Activated CD4-positive, alpha-beta T cell treated with anti-CD3 and anti-CD28 coated beads, Interleukin-2, amount 10 ng/mL, durations not matched to agents 24 days and 14 days (primary cell): ENCODE measurements at regions of chr1 and their contacts with region 1.

Region 1: GRCh38 chr1:11681071-11681771 is at the start of gene MAD2L2:
- DNase-seq: peak; percentile 98
- H3K4me3 Mint-ChIP-seq: peak within 1 kb of the TSS; percentile 92
- H3K27ac Mint-ChIP-seq: peak within 1 kb of the TSS; percentile 93
- H3K4me1 Mint-ChIP-seq: peaks cover 16% of the 10 kb centered on the region
- H3K27me3 Mint-ChIP-seq: peaks cover 10% of the 10 kb centered on the region
- total RNA-seq, gene MAD2L2: 80.1 and 81.5 TPM in 2 replicates

Region 2: GRCh38 chr1:11272832-11273594 is 408.2 kb before region 1 on chr1 and contains the start of gene UBIAD1:
- intact Hi-C with region 1: loop called (anchors 5 kb)
- DNase-seq: peak; percentile 93
- H3K4me3 Mint-ChIP-seq: peak within 1 kb of the TSS; percentile 91
- H3K27ac Mint-ChIP-seq: peak within 1 kb of the TSS; percentile 89
- H3K4me1 Mint-ChIP-seq: peaks cover 24% of the 10 kb centered on the region
- H3K27me3 Mint-ChIP-seq: peaks cover 2% of the 10 kb centered on the region
- total RNA-seq, gene UBIAD1: 32.4 and 32.5 TPM in 2 replicates

Region 3: DNA sequence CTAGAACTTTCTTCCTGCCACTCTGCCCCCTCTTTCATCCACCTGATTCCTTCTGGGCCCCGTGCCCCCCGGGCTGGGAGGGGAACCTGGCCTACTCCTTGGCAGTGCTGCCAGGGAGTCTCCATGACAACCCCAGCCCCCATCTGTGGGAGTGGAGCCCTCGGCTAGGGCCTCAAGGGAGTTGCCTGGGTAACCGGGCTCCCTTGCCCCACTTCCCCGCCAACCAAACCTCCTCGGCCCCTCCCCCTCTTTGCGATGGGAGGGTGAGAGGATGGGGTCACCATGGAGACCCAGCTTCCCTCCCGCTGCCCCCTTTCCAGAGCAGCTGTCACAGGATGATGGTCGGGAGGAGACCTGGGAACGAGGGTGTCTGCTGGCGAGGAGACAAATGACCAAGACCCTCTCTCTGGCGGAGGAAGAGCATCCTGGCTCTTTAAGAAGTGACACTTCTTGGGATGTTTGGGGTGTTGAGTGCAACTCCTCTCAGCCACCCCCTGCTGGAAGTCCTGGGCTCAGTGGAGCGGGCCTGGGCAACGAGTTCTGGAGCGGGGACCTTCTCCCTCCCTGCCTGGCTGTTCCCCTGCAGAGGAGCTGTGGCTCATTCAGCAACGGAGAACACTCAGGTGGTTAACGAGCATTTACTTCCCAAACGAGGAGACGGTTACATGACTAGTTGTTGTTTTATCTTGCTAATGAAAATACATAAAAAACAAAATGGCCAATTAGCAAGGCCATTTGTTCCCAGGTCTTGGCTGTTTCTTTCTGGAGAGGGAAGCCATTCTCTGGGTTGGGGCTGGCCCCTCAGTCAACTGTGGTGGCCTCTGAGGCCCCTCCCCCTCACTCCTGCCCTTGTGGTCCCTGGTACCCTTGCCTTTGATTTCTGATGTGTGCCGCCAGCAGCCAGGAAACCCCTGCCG is 325.4 kb before region 1 on chr1:
- intact Hi-C with region 1: no loop called
- DNase-seq: no peak
- H3K4me3 Mint-ChIP-seq: no peak overlapping the region
- H3K27ac Mint-ChIP-seq: no peak overlapping the region
- H3K4me1 Mint-ChIP-seq: peaks cover 5% of the 10 kb centered on the region
- H3K27me3 Mint-ChIP-seq: peaks cover 9% of the 10 kb centered on the region

Region 4: GRCh38 chr1:11654137-11654938 is 26.9 kb before region 1 on chr1 and contains the starts of genes FBXO2 and FBXO44:
- intact Hi-C with region 1: loop called (anchors 2 kb)
- DNase-seq: peak; percentile 89
- H3K4me3 Mint-ChIP-seq: peak within 1 kb of the TSS; percentile 77
- H3K27ac Mint-ChIP-seq: no peak within 1 kb of the TSS
- H3K4me1 Mint-ChIP-seq: peaks cover 15% of the 10 kb centered on the region
- H3K27me3 Mint-ChIP-seq: peaks cover 16% of the 10 kb centered on the region
- total RNA-seq, gene FBXO2: 0.76 and 1.0 TPM in 2 replicates
- total RNA-seq, gene FBXO44: 20.6 and 25.4 TPM in 2 replicates

Region 5: DNA sequence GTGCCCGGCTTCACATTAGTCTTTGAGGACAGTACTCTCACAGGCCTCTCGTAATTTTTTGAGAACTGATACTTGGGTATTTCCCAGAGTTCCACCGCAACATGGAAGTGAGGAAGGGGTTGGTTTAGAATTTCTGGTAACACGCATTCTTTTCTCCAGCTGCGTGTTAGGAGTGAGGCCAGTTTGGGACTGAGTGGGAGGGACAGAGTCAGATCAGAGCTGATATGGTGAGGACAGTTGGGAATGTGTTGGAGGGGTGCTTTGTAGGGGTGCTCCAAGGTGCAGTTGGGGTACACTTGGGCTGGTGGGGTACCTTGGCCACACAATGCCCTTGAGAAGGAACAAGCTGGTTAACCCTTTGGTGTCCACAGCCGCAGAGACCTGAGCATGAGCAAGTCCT is 10.5 kb before region 1 on chr1:
- intact Hi-C with region 1: loop called (anchors 2 kb)
- DNase-seq: no peak
- H3K4me3 Mint-ChIP-seq: no peak overlapping the region
- H3K27ac Mint-ChIP-seq: no peak overlapping the region
- H3K4me1 Mint-ChIP-seq: peaks cover 5% of the 10 kb centered on the region
- H3K27me3 Mint-ChIP-seq: no peaks in the 10 kb centered on the region

Region 6: GRCh38 chr1:11719313-11720032 is 38.3 kb after region 1 on chr1:
- intact Hi-C with region 1: loop called (anchors 5 kb)
- DNase-seq: peak; percentile 95
- H3K4me3 Mint-ChIP-seq: peak overlapping the region; percentile 81
- H3K27ac Mint-ChIP-seq: peak overlapping the region; percentile 89
- H3K4me1 Mint-ChIP-seq: peaks cover 10% of the 10 kb centered on the region
- H3K27me3 Mint-ChIP-seq: peaks cover 7% of the 10 kb centered on the region

Region 7: GRCh38 chr1:11805447-11806306 is 124.5 kb after region 1 on chr1 and contains the starts of genes CLCN6 and MTHFR:
- intact Hi-C with region 1: loop called (anchors 5 kb)
- DNase-seq: peak; percentile 100
- H3K4me3 Mint-ChIP-seq: peak within 1 kb of the TSS; percentile 99
- H3K27ac Mint-ChIP-seq: peak within 1 kb of the TSS; percentile 95
- H3K4me1 Mint-ChIP-seq: peaks cover 53% of the 10 kb centered on the region
- H3K27me3 Mint-ChIP-seq: no peaks in the 10 kb centered on the region
- total RNA-seq, gene CLCN6: 12.7 and 15.2 TPM in 2 replicates
- total RNA-seq, gene MTHFR: 15.6 and 18.4 TPM in 2 replicates